Common myeloid progenitor, CD34-positive (primary cell): ENCODE measurements at regions of chr1 and their contacts with region 1.

Region 1: GRCh38 chr1:161763522-161764098 is 2.5 kb upstream of the ATF6 start:
- DNase-seq: peak in 2 of 3 donors; percentile 54 to 61
- H3K4me3 ChIP-seq: peak overlapping the region in 1 of 7 experiments; percentile 48
- H3K27ac ChIP-seq: no peak overlapping the region
- H3K4me1 ChIP-seq: peaks cover 11 to 24% (median 13%) of the 10 kb centered on the region in 4 experiments
- H3K27me3 ChIP-seq: no peaks in the 10 kb centered on the region

Region 2: GRCh38 chr1:161676958-161677689 is 86.5 kb before region 1 on chr1:
- CTCF ChIA-PET with region 1: no interaction called
- POLR2A ChIA-PET with region 1: no interaction called
- DNase-seq: no peak
- H3K4me3 ChIP-seq: no peak overlapping the region
- H3K27ac ChIP-seq: no peak overlapping the region
- H3K4me1 ChIP-seq: no peaks in the 10 kb centered on the region
- H3K27me3 ChIP-seq: peaks cover 0 to 4% (median 0%) of the 10 kb centered on the region in 5 experiments

Region 3: DNA sequence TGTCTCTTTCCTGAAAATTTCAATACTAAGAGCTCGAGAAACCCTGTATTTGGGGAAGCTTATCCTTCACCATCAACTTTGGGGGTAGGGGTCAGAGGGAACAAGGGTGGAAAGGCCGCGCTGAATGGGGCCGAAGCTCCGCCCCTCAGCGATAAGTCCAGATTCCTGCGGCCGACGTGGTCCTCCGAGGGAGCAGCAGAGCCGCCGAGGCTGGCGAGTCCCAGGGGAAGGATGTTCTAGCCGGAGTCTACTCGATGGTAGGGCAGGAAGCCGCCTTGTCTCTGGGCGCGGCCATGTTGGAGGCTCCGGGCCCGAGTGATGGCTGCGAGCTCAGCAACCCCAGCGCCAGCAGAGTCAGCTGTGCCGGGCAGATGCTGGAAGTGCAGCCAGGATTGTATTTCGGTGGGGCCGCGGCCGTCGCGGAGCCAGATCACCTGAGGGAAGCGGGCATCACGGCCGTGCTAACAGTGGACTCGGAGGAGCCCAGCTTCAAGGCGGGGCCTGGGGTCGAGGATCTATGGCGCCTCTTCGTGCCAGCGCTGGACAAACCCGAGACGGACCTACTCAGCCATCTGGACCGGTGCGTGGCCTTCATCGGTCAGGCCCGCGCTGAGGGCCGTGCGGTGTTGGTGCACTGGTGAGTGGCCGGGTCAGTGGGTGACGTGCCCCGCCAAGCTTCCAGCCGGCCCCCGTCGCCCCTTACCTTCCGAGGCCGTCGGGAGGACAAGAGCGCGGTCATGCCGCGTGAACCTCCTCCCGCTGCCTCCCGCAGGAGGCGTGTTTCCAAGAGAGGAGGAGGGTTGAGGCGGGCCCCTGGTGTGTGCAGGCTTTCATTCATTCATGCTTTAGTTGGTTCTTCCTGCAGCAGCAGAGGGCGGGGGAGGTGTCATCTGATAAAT is 13.9 kb before region 1 on chr1 and contains the start of gene DUSP12:
- CTCF ChIA-PET with region 1: interaction called, 17 read pairs
- POLR2A ChIA-PET with region 1: interaction called, 4 read pairs
- DNase-seq: peak; percentile 93 to 95 (median 95)
- H3K4me3 ChIP-seq: peak within 1 kb of the TSS; percentile 84 to 100 (median 98)
- H3K27ac ChIP-seq: peak within 1 kb of the TSS; percentile 40 to 85
- H3K4me1 ChIP-seq: peaks cover 3 to 17% (median 12%) of the 10 kb centered on the region in 4 experiments
- H3K27me3 ChIP-seq: no peaks in the 10 kb centered on the region